Sciatic nerve (tissue), 2 donors: ENCODE measurements at regions of chr10 and their contacts with region 1.

Region 1: DNA sequence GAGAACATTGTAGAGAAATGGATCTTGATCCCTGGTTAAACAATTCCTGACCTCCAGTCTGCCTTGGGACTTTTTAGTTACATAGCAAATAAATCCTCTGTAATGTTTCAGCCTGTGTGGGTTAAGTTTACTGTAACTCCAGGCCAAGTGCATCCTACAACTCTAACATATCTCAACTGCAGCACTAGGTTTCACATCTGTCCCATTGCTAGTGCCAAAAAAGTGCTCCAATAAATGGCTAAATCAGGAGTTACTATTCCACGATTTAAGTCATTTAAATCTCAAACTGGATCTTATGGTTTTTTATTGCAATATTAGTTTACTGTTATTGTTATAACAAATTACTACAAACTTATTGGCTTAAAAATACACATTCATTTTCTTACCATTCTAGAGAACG is 479.6 kb downstream of the GPAM start:
- DNase-seq: no peak
- ATAC-seq: no peak

Region 2: GRCh38 chr10:110481934-110482333 is 1222.1 kb before region 1 on chr10:
- intact Hi-C with region 1: loop called (anchors 5 kb)
- DNase-seq: no peak
- ATAC-seq: no peak

Region 3: GRCh38 chr10:111579473-111579872 is 124.5 kb before region 1 on chr10:
- intact Hi-C with region 1: no loop called
- DNase-seq: no peak
- ATAC-seq: no peak

Region 4: DNA sequence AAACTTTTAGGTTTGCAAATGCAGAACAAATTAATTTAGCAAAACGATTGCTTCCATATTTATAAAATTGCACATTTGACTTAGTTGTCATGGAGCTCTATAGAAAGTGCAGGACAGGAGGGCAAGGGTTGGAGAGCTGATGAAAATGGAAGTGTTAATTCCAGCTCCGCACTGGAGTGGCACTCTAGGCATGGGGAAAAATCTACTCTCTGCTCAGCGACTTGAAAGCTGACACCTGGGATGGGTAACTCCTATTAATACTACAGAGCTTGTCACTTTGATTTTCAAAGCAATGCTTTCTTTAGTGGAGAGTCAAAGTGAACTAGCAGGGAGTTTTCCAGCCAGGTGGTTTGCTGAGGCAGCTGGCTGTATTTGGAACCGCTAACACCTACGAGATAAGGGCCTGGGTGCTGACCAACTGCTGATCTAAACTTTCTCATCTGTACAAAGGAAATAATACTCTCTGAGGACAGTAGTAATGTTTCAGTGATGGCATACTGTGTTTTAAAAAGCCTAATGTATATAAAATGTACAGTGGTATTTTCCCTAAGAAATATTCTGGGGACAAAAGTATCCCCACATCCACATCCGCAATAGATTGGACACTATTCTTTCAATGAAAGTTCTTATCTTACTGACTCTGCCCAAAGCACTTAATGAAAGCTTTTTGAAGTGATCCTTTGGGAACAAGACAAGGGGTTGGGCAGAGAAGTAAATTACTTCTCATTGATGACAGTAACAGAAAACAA is 35.3 kb after region 1 on chr10:
- intact Hi-C with region 1: no loop called
- DNase-seq: no peak
- ATAC-seq: no peak

Region 5: DNA sequence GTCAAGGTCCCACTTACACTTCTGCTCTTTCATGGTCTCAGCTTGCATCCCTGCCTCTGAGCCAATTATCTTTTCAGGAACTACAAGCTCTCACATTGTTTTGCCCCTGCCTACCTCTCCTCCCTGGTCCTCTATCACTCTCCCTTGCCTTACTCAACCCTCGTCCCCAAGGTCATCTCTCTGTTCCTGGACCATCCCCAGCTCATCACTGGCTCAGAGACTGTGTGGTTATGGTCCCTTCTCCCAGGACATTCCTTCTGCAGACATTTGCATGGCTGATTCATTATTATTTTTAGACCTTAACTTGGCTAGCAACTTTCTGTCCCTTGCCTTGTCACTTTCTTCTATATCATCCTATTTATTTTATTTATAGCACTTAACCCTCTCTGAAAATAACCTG is 497.3 kb after region 1 on chr10:
- intact Hi-C with region 1: no loop called
- DNase-seq: no peak
- ATAC-seq: no peak

Region 6: GRCh38 chr10:112842832-112843360 is 1138.9 kb after region 1 on chr10:
- intact Hi-C with region 1: no loop called
- DNase-seq: no peak
- ATAC-seq: peak; percentile 69